B cell (primary cell): ENCODE measurements at regions of chr12 and their contacts with region 1.

Region 1: DNA sequence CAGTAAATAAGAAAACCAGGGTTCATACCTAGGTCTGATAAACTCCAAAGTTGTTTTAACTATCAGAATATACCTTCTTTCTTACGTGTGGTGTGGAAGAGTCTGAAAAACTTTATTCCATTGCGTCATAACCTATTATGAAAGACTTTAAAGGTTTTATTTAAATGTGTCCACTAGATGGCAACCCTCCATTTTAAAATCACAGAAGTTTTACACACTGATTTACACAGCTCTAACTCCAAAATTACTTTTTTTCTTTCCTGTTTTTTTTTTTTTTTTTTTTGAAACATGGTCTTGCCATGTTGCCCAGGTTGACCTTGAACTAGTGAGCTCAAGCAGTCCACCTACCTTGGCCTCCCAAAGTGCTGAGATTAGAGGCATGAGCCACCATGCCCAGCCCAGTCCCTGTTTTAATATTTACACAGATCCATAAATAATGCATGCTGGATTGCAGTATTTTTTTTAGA is 17.3 kb upstream of the TMPRSS12 start:
- DNase-seq: peak; percentile 76
- ATAC-seq: peak; percentile 73
- H3K4me3 ChIP-seq: no peak overlapping the region
- H3K4me3 Mint-ChIP-seq: peak overlapping the region; percentile 27
- H3K27ac ChIP-seq: peak overlapping the region; percentile 2 to 72
- H3K27ac Mint-ChIP-seq: peak overlapping the region; percentile 62
- H3K4me1 ChIP-seq: peaks cover 3% of the 10 kb centered on the region in 2 donors
- H3K4me1 Mint-ChIP-seq: peaks cover 6% of the 10 kb centered on the region
- H3K27me3 ChIP-seq: no peaks in the 10 kb centered on the region
- H3K27me3 Mint-ChIP-seq: no peaks in the 10 kb centered on the region
- CTCF ChIP-seq: peak; percentile 76

Region 2: GRCh38 chr12:50597200-50598195 is 227.9 kb before region 1 on chr12:
- CTCF ChIA-PET with region 1: no interaction called
- POLR2A ChIA-PET with region 1: no interaction called
- intact Hi-C with region 1: no loop called
- DNase-seq: peak; percentile 50
- ATAC-seq: peak; percentile 81
- H3K4me3 ChIP-seq: peak overlapping the region in 3 of 5 experiments; percentile 9 to 23 (median 17)
- H3K4me3 Mint-ChIP-seq: peak overlapping the region; percentile 57
- H3K27ac ChIP-seq: peak overlapping the region; percentile 28 to 75
- H3K27ac Mint-ChIP-seq: peak overlapping the region; percentile 54
- H3K4me1 ChIP-seq: peaks cover 19 to 20% of the 10 kb centered on the region in 2 donors
- H3K4me1 Mint-ChIP-seq: peaks cover 49% of the 10 kb centered on the region
- H3K27me3 ChIP-seq: no peaks in the 10 kb centered on the region
- H3K27me3 Mint-ChIP-seq: no peaks in the 10 kb centered on the region
- CTCF ChIP-seq: no peak

Region 3: GRCh38 chr12:50924439-50925341 is 99.3 kb after region 1 on chr12:
- CTCF ChIA-PET with region 1: interaction called, 25 read pairs
- POLR2A ChIA-PET with region 1: interaction called, 3 read pairs
- intact Hi-C with region 1: loop called (anchors 1 kb)
- DNase-seq: peak; percentile 83
- ATAC-seq: peak; percentile 94
- H3K4me3 ChIP-seq: peak overlapping the region; percentile 75 to 99 (median 88)
- H3K4me3 Mint-ChIP-seq: peak overlapping the region; percentile 96
- H3K27ac ChIP-seq: peak overlapping the region; percentile 81 to 91
- H3K27ac Mint-ChIP-seq: peak overlapping the region; percentile 98
- H3K4me1 ChIP-seq: peaks cover 43 to 44% of the 10 kb centered on the region in 2 donors
- H3K4me1 Mint-ChIP-seq: peaks cover 63% of the 10 kb centered on the region
- H3K27me3 ChIP-seq: no peaks in the 10 kb centered on the region
- H3K27me3 Mint-ChIP-seq: no peaks in the 10 kb centered on the region
- CTCF ChIP-seq: no peak

Region 4: DNA sequence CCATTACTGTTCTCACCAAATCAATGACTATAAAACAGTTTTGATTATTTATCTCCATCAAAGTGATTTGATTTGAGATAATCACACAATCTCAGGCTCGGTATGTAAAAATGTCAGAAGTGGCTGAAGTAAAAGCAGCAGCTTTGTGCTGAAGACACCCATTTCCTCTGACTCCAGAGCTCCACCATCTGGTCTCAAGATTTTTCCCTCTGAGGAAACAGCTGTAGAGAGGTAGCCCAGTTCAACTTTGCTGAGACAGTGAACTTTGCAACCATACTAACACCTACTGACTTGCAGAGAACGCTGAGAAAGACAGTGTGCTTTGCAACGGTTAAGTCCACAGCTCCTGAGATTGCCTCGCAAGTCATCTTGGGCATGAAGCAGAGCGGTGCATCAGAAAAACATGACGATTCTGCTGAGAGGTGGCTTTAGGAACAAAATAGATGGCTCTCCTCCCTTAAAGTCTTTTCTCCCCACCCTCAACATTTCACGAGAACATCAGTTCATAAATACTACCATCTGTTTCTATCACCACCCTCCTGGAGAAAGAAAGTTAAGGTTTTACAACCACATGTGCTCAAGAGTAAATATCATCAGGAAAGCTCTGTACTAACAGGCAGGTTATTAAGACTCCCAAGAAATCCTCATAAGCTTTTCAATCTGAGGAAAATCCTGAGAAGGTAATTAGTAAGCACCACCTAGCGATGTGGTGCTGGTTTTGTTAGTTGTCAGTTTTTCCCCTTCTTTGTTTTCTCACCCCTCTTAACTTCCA is 161.7 kb after region 1 on chr12:
- CTCF ChIA-PET with region 1: interaction called, 343 read pairs
- POLR2A ChIA-PET with region 1: interaction called, 4 read pairs
- intact Hi-C with region 1: loop called (anchors 1 kb)
- DNase-seq: peak; percentile 65
- ATAC-seq: peak; percentile 80
- H3K4me3 ChIP-seq: no peak overlapping the region
- H3K4me3 Mint-ChIP-seq: no peak overlapping the region
- H3K27ac ChIP-seq: no peak overlapping the region
- H3K27ac Mint-ChIP-seq: no peak overlapping the region
- H3K4me1 ChIP-seq: peaks cover 0 to 2% of the 10 kb centered on the region in 2 donors
- H3K4me1 Mint-ChIP-seq: peaks cover 6% of the 10 kb centered on the region
- H3K27me3 ChIP-seq: no peaks in the 10 kb centered on the region
- H3K27me3 Mint-ChIP-seq: no peaks in the 10 kb centered on the region
- CTCF ChIP-seq: peak; percentile 40

Region 5: DNA sequence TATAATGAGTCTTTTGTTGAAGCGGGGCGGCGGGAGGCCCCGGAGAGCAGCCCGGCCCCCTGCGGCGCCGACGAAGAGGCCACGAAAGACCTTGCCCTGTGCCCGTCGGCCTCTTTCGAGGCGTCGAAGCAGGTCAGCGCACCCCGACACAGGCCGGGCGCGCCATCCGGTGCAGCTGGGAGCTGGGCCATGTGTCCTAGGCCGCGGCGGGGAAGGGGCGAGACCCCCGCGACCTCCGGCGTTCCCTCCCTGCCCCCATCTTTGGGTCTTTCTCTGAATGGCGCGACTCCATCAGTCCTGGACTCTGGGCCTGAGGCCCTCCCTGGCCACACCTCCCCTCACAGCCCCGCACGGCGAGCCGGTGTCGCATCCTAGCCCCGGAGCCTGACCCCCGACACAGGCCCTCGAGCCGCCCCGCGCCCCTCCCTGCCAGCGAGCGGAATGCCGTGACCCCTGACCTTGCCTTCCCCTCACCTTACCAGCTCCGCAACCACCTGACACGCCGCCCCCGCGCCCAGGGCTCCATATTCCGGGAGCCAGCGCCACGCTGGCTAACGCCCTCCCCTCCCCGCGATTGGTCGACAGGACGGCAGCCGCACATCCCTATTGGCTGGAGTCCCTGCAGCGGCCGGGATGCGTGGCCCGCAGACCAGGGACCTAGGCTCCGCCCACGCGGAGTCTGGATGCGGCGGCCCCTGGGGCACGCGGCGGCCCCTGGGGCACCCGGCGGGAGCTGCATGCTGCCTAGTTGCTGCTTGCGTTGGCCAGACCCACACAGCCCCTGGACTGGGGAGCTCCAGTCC is 200.6 kb after region 1 on chr12 and contains the start of gene SLC11A2:
- CTCF ChIA-PET with region 1: interaction called, 28 read pairs
- POLR2A ChIA-PET with region 1: no interaction called
- intact Hi-C with region 1: no loop called
- DNase-seq: peak; percentile 92
- ATAC-seq: peak; percentile 98
- H3K4me3 ChIP-seq: peak within 1 kb of the TSS; percentile 34 to 97 (median 78)
- H3K4me3 Mint-ChIP-seq: peak within 1 kb of the TSS; percentile 94
- H3K27ac ChIP-seq: peak within 1 kb of the TSS; percentile 71 to 74
- H3K27ac Mint-ChIP-seq: peak within 1 kb of the TSS; percentile 93
- H3K4me1 ChIP-seq: peaks cover 13 to 28% of the 10 kb centered on the region in 2 donors
- H3K4me1 Mint-ChIP-seq: peaks cover 36% of the 10 kb centered on the region
- H3K27me3 ChIP-seq: peaks cover 0 to 3% (median 0%) of the 10 kb centered on the region in 4 experiments
- H3K27me3 Mint-ChIP-seq: peaks cover 4% of the 10 kb centered on the region
- CTCF ChIP-seq: no peak
- total RNA-seq, gene SLC11A2: 42.0 and 45.7 TPM in 2 replicates

Region 6: DNA sequence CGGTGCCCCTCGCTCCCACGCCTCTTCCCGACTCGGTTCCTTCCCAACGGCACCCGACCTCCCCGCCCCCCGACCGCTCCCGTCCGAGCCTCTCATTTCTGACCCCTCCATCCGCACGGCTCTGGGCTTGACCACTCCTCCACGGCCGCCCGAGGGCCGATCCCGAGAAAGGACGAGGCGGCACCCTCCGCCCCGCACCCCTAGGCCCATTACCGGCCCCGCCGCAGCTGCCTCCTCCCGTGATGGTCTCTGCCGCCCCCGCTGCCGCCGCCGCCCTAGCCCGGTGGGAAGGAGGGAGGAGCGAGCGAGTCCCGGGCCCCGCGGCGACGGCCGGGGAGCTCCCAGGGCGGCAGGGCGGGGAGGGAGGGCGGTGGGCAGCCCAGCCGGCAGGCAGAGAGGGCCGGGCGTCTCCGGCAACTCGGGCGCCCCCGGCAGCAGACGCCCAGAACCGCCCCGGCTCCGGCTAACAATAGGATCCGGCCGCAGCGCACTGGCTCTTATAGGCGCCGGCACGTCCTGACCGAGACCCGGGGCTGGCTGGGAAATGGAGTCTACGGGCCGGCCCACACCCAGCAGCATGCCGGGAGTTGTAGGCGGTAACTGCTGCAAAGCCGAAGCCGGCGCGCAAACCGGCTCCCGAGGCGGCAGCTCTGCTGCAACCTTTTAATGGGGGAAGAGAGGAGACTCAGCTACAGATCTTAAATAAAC is 257.9 kb after region 1 on chr12 and contains the start of gene CSRNP2:
- CTCF ChIA-PET with region 1: interaction called, 4 read pairs
- POLR2A ChIA-PET with region 1: no interaction called
- intact Hi-C with region 1: loop called (anchors 1 kb)
- DNase-seq: peak; percentile 96
- ATAC-seq: peak; percentile 99
- H3K4me3 ChIP-seq: peak within 1 kb of the TSS; percentile 54 to 87 (median 77)
- H3K4me3 Mint-ChIP-seq: peak within 1 kb of the TSS; percentile 96
- H3K27ac ChIP-seq: peak within 1 kb of the TSS; percentile 11 to 88
- H3K27ac Mint-ChIP-seq: peak within 1 kb of the TSS; percentile 88
- H3K4me1 ChIP-seq: peaks cover 9 to 17% of the 10 kb centered on the region in 2 donors
- H3K4me1 Mint-ChIP-seq: peaks cover 25% of the 10 kb centered on the region
- H3K27me3 ChIP-seq: no peaks in the 10 kb centered on the region
- H3K27me3 Mint-ChIP-seq: no peaks in the 10 kb centered on the region
- CTCF ChIP-seq: peak; percentile 20
- total RNA-seq, gene CSRNP2: 49.8 and 52.3 TPM in 2 replicates

Region 7: DNA sequence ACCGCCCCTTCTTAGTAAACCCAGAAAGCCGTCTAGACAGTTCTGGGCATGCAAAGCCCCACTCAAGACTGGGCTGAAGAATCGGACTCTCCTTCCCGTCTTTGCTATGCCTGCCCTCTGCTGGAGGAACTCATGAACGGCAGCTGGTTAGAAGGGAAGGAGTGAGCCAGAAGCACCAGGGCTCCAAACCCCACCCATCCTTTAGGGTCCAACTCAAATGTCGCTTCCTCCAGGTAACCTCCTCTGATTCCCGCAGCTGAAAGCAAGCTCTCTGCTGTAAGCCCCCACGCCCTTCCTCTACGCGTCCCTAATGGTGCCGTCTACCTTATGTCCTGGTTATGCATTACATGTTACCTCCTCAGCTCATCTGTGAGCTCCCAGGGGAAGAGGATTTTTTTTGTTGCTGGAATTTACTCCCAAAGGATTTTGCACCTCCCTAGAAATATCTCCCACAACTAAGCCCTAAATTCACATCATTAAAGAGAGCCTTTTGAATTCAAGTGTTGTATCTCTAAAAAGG is 706.6 kb after region 1 on chr12:
- CTCF ChIA-PET with region 1: interaction called, 4 read pairs
- POLR2A ChIA-PET with region 1: no interaction called
- intact Hi-C with region 1: loop called (anchors 5 kb)
- DNase-seq: peak; percentile 84
- ATAC-seq: peak; percentile 98
- H3K4me3 ChIP-seq: no peak overlapping the region
- H3K4me3 Mint-ChIP-seq: no peak overlapping the region
- H3K27ac ChIP-seq: no peak overlapping the region
- H3K27ac Mint-ChIP-seq: no peak overlapping the region
- H3K4me1 ChIP-seq: peaks cover 7 to 8% of the 10 kb centered on the region in 2 donors
- H3K4me1 Mint-ChIP-seq: peaks cover 9% of the 10 kb centered on the region
- H3K27me3 ChIP-seq: peaks cover 0 to 13% (median 0%) of the 10 kb centered on the region in 4 experiments
- H3K27me3 Mint-ChIP-seq: peaks cover 30% of the 10 kb centered on the region
- CTCF ChIP-seq: peak; percentile 92